ENCODE measurements at regions of chr20 and their contacts with region 1.

Region 1: DNA sequence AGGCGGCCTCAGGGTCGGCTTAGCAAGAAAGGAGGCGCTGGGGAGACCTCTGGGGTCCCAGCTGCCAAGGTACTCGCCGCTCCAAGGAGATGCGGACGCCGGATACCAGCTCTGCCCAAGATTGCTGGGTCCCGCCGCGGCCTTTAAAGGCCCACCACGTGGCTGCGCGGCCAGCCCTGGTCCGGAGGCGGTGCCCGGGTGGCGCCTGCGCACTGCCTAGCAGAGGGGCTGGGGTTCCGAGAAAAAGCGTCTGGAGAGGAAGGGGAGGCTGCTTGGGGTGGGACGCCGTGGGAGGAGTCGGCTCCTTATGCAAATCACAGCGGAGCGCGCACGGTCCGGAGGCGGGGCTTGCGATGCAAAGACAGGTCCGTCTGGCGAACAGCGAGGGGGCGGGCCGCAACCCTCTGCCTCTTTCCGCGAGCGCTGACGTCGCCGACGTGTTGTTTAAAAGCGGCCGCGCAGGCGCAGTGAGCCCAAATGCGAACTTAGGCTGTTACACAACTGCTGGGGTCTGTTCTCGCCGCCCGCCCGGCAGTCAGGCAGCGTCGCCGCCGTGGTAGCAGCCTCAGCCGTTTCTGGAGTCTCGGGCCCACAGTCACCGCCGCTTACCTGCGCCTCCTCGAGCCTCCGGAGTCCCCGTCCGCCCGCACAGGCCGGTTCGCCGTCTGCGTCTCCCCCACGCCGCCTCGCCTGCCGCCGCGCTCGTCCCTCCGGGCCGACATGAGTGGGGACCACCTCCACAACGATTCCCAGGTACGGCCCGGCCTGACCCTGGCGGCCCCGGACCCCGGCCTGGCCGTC is at the start of gene TOP1:
- DNase-seq: peak; percentile 100
- H3K4me3 ChIP-seq: peak within 1 kb of the TSS; percentile 95 to 100 (median 96)
- H3K27ac ChIP-seq: peak within 1 kb of the TSS; percentile 95 to 99
- H3K4me1 ChIP-seq: peaks cover 0 to 18% of the 10 kb centered on the region in 2 donors
- H3K27me3 ChIP-seq: no peaks in the 10 kb centered on the region
- CTCF ChIP-seq: no peak
- POLR2A ChIP-seq: peak; percentile 91
- total RNA-seq, gene TOP1: 24.0 to 41.6 (median 40.3) TPM

Region 2: GRCh38 chr20:41003143-41003883 is 25.2 kb before region 1 on chr20:
- intact Hi-C with region 1: no loop called
- DNase-seq: peak; percentile 60 to 80
- H3K4me3 ChIP-seq: peak overlapping the region in 1 of 3 donors; percentile 32
- H3K27ac ChIP-seq: peak overlapping the region; percentile 88 to 96
- H3K4me1 ChIP-seq: peaks cover 0 to 15% of the 10 kb centered on the region in 2 donors
- H3K27me3 ChIP-seq: no peaks in the 10 kb centered on the region
- CTCF ChIP-seq: no peak
- POLR2A ChIP-seq: no peak

Region 3: DNA sequence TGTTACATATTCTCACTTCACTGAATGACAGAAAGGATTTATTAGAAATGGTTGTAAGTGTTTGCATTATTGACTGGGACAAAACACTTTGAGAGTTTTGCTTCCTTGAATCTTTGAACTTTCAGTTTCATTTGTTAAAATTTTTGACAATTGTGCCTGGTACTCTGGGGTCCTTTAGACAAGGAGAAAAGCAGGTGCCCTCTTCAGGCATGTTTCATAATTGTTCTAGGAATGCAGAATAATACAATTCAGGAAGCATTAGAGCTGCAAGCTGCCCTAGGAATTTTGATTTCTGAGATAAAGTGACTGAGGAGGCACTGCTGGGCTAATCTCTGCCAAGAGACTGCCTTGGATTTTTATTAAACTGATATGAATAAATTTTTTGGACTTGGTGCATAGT is 49.8 kb after region 1 on chr20:
- intact Hi-C with region 1: loop called (anchors 10 kb)
- DNase-seq: no peak
- H3K4me3 ChIP-seq: no peak overlapping the region
- H3K27ac ChIP-seq: peak overlapping the region in 1 of 2 donors; percentile 33
- H3K4me1 ChIP-seq: peaks cover 0 to 12% of the 10 kb centered on the region in 2 donors
- H3K27me3 ChIP-seq: no peaks in the 10 kb centered on the region
- CTCF ChIP-seq: peak in 2 of 3 donors; percentile 42 to 57
- POLR2A ChIP-seq: no peak